HepG2 (cell line): ENCODE measurements at regions of chr5 and their contacts with region 1.

Region 1: DNA sequence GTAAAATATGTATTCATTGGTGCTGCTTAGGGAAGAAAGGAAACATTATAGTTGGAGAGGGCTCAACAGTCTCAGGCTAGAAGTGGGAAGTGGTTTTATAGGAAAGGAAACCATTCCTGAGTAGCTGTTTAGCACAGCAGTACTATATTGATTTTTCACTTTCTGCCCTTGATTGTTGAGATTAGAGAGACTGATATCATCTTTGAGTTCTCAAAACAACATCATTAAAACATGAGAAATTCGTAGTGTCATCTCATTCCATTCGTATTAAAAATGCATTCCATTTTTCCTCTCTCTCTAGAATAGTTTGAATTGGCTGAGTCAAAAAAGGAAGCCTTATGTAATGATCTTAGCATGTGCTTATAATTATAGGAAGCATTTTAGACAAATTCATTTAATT is 14.1 kb downstream of the POLR3G start:
- DNase-seq: no peak
- ATAC-seq: no peak
- H3K4me3 ChIP-seq: no peak overlapping the region
- H3K27ac ChIP-seq: no peak overlapping the region
- H3K4me1 ChIP-seq: no peaks in the 10 kb centered on the region
- H3K27me3 ChIP-seq: no peaks in the 10 kb centered on the region
- CTCF ChIP-seq: no peak
- EP300 ChIP-seq: no peak
- POLR2A ChIP-seq: no peak
- RAD21 ChIP-seq: no peak

Region 2: DNA sequence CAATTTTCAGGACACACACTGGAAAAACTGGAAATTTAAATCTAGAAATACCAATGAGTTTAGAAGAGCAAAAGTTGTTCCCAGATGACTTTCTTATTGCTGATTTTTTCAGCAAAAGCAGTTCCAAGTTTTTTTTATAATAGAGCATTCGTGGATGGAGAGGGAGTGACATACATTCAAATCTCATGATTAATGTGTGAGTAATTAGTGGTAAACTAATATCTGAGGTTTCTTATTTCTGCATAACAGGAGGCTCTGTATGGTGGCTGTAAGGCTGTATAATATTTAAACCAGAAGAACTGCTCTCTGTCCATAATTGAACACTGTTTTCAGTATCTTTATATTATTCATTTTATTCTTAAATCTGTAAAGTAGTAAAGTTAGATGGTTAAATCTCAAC is 14.8 kb after region 1 on chr5:
- CTCF ChIA-PET with region 1: no interaction called
- POLR2A ChIA-PET with region 1: no interaction called
- in situ Hi-C with region 1: no loop called
- intact Hi-C with region 1: loop called (anchors 1 kb)
- DNase-seq: no peak
- ATAC-seq: no peak
- H3K4me3 ChIP-seq: no peak overlapping the region
- H3K27ac ChIP-seq: no peak overlapping the region
- H3K4me1 ChIP-seq: no peaks in the 10 kb centered on the region
- H3K27me3 ChIP-seq: no peaks in the 10 kb centered on the region
- CTCF ChIP-seq: no peak
- EP300 ChIP-seq: no peak
- POLR2A ChIP-seq: no peak
- RAD21 ChIP-seq: no peak